ENCODE measurements at regions of chr14 and their contacts with region 1.

Region 1: DNA sequence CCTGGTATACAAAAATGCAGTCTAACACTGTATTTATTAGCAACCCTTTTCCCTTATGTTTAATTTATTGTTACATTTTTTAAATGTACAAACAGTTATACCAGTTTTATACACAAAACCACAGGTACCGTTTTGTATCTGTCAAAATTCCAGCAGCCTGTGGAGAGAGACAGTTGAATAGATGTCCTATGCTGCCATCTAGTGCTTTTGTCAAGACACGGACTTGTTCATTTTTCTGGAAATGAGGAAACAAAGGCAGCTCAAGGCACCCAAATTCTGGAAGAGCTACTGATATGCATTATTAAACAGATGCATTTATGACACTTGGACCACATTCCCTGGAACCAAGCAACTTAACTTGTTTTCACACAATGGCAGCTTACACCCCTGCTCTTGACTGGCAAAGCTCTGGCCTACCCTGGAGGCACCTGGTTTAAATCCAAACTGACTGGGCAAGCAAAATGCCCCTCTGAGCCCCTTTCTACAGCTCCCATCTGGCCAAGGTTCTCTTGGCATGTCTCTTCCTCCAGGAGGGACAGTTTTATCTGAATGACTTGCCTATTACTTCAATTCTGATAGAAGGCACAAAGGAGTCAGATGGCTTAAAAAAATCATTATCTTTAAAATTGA is 286.9 kb upstream of the PRKD1 start:
- DNase-seq: no peak
- ATAC-seq: peak; percentile 69; the same call in 1 of the 2 replicates
- H3K4me3 ChIP-seq: no peak overlapping the region
- H3K27ac ChIP-seq: no peak overlapping the region
- H3K4me1 ChIP-seq: no peaks in the 10 kb centered on the region
- H3K27me3 ChIP-seq: no peaks in the 10 kb centered on the region
- CTCF ChIP-seq: peak; percentile 54

Region 2: DNA sequence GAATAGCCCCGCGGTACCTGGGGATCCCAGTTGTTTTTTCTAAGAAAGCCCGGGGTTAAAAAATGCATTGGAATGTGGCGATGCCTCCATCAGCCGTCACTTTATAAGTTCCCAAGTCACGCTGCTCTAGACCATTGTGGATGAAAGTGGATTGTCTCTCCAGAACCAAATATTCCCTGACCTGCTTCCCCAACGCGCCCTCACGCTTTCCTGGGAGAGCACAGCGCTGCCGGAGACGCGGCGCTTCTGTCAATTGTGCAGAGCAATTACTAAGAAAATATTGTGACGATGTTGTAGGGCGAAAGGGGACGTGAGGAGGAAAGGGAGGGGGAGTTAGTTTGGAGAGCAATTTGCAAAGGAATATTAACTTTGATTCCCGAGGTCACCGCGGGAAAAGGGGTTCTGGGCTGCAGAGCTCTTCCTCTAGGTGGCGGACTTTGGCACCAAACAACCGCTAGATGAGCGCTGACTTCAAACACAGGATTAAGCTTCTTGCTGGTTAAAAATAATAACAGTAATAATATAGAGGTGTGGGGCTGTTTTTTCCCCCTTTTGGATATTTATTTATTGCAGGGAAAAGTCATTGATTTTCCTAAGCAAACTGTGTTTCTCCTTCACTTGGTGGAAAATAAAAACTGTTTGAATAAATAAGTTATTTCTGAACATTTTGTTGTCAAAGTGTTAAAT is 1457.5 kb before region 1 on chr14:
- CTCF ChIA-PET with region 1: no interaction called
- POLR2A ChIA-PET with region 1: no interaction called
- in situ Hi-C with region 1: no loop called
- intact Hi-C with region 1: loop called (anchors 5 kb)
- DNase-seq: no peak
- ATAC-seq: peak; percentile 88
- H3K4me3 ChIP-seq: peak overlapping the region; percentile 19 to 45; a peak in 3 of 4 replicates
- H3K27ac ChIP-seq: no peak overlapping the region
- H3K4me1 ChIP-seq: no peaks in the 10 kb centered on the region
- H3K27me3 ChIP-seq: peaks cover 5% of the 10 kb centered on the region
- CTCF ChIP-seq: peak; percentile 83

Region 3: DNA sequence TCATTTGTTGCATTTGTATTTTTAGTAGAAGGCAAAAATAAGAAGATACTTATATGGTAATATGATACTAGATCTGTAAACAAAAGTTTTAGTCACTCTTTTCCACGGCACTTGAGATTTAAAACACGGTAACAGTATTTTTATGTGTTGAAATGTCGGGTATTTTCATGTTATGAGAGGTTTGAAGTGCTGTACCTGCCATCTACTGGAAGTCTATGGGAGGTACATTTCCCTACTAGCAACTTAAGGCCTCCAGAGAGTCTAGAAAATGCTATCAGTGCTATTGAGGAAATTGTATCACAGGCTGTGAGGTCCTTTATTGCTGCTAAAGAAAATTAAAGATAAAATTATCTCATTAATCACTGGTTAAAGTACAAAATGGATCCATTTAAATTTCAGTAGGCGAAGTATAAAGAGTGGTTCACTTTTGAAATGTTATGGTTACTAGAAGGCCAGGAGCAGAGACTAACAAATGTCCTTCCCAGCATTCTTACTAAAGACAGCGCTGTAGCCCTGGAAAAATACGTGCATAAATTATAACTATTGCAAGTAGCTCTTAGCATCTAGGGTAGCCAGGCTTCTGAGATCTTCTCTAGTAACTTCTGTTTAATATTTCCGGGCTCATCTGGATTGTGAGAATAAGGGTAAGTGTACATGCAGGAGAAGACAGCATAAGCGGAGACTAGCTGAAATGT is 209.3 kb before region 1 on chr14:
- CTCF ChIA-PET with region 1: no interaction called
- POLR2A ChIA-PET with region 1: no interaction called
- in situ Hi-C with region 1: no loop called
- intact Hi-C with region 1: loop called (anchors 10 kb)
- DNase-seq: peak; percentile 15
- ATAC-seq: no peak
- H3K4me3 ChIP-seq: no peak overlapping the region
- H3K27ac ChIP-seq: no peak overlapping the region
- H3K4me1 ChIP-seq: no peaks in the 10 kb centered on the region
- H3K27me3 ChIP-seq: no peaks in the 10 kb centered on the region
- CTCF ChIP-seq: peak; percentile 66; the same call in 1 of the 2 replicates

Region 4: GRCh38 chr14:30159374-30159773 is 55.2 kb before region 1 on chr14:
- CTCF ChIA-PET with region 1: no interaction called
- POLR2A ChIA-PET with region 1: no interaction called
- in situ Hi-C with region 1: no loop called
- intact Hi-C with region 1: no loop called
- DNase-seq: no peak
- ATAC-seq: no peak
- H3K4me3 ChIP-seq: no peak overlapping the region
- H3K27ac ChIP-seq: no peak overlapping the region
- H3K4me1 ChIP-seq: no peaks in the 10 kb centered on the region
- H3K27me3 ChIP-seq: no peaks in the 10 kb centered on the region
- CTCF ChIP-seq: no peak

Region 5: GRCh38 chr14:30270200-30271161 is 55.9 kb after region 1 on chr14:
- CTCF ChIA-PET with region 1: interaction called, 20 read pairs
- POLR2A ChIA-PET with region 1: interaction called, 9 read pairs
- in situ Hi-C with region 1: no loop called
- intact Hi-C with region 1: no loop called
- DNase-seq: peak; percentile 58
- ATAC-seq: peak; percentile 100
- H3K4me3 ChIP-seq: peak overlapping the region; percentile 22 to 44
- H3K27ac ChIP-seq: no peak overlapping the region
- H3K4me1 ChIP-seq: peaks cover 3% of the 10 kb centered on the region
- H3K27me3 ChIP-seq: no peaks in the 10 kb centered on the region
- CTCF ChIP-seq: peak; percentile 90

Region 6: DNA sequence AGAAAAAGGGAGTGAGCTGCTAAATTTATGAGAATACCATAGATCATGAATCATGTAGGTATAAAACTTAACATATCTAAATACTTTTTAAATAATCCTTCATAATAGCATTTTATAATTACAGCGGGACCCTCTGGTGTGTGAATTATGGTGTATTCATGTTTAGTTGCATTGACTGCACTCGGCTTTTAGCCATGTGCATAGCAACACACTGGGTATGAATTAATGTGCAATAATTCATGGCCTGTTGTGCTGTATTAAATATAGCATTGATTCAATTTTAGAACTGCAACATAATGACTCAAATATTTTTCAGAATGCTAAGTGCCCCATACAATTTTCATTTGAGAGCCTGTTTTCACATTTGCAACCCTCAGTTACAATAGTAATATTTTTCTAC is 94.8 kb after region 1 on chr14:
- CTCF ChIA-PET with region 1: no interaction called
- POLR2A ChIA-PET with region 1: no interaction called
- in situ Hi-C with region 1: no loop called
- intact Hi-C with region 1: no loop called
- DNase-seq: no peak
- ATAC-seq: no peak
- H3K4me3 ChIP-seq: no peak overlapping the region
- H3K27ac ChIP-seq: no peak overlapping the region
- H3K4me1 ChIP-seq: no peaks in the 10 kb centered on the region
- H3K27me3 ChIP-seq: no peaks in the 10 kb centered on the region
- CTCF ChIP-seq: no peak

Measured in Panc1 (cell line).